K562 (cell line): ENCODE measurements at regions of chr10 and their contacts with region 1.

Region 1: DNA sequence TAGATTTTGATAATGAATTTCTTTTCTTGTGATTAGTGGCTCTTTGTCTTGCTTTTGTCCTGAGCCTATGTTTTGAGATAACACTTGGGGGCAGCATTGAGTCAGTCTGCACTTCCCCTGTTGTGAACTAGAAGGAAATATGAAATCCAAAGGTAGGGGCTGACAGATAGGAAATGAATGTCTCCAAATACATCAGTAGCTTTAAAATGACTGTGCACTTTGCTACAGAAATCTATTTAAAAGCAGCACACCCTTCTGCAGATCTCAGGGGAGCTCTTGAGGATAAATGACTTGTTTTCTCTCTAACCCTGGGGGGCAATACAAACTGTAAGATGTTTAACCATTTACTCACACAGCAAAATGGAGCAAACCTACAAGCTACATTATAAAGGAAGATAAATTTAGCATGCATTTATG is 176.0 kb upstream of the MYO3A start:
- DNase-seq: peak; percentile 45 to 66 (median 53)
- ATAC-seq: peak; percentile 92
- H3K4me3 ChIP-seq: no peak overlapping the region
- H3K27ac ChIP-seq: no peak overlapping the region
- H3K4me1 ChIP-seq: peaks cover 0 to 4% of the 10 kb centered on the region in 2 experiments; a peak in 3 of 5 replicates
- H3K27me3 ChIP-seq: no peaks in the 10 kb centered on the region
- CTCF ChIP-seq: peak; percentile 62 to 81 (median 73)
- EP300 ChIP-seq: no peak
- POLR2A ChIP-seq: no peak
- RAD21 ChIP-seq: peak; percentile 75 to 78

Region 2: DNA sequence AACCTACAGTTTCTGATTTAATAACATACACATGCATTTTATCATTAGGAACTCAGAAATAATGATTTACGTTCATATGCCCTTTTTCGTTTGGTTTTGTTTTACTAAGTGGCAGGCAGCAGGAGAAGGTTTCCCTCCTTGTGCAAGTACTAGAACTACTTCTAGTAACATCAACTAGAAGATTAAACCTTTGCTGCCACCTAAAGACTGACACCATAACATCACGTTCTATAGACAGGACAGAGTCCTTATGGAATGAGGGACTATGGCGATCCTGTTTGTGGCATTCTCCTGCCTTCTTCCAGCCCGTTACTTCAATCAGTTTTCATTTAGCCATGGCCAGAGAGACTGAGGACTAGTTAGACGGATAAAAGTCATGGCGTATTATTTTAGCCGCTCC is 511.7 kb after region 1 on chr10:
- CTCF ChIA-PET with region 1: no interaction called
- POLR2A ChIA-PET with region 1: interaction called, 5 read pairs
- in situ Hi-C with region 1: no loop called
- intact Hi-C with region 1: loop called (anchors 1 kb)
- DNase-seq: peak in 2 of 4 experiments; percentile 26 to 29
- ATAC-seq: peak; percentile 77
- H3K4me3 ChIP-seq: no peak overlapping the region
- H3K27ac ChIP-seq: no peak overlapping the region
- H3K4me1 ChIP-seq: no peaks in the 10 kb centered on the region
- H3K27me3 ChIP-seq: peaks cover 0 to 4% of the 10 kb centered on the region in 2 experiments; a peak in 3 of 5 replicates
- CTCF ChIP-seq: peak; percentile 29 to 53 (median 38); a peak in 4 of 6 replicates
- EP300 ChIP-seq: no peak
- POLR2A ChIP-seq: no peak
- RAD21 ChIP-seq: peak; percentile 43 to 58